H1 (cell line): ENCODE measurements at regions of chr20 and their contacts with region 1.

Region 1: GRCh38 chr20:45138561-45139300 is 14.5 kb upstream of the WFDC12 start:
- DNase-seq: peak; percentile 56 to 99
- H3K4me3 ChIP-seq: no peak overlapping the region
- H3K27ac ChIP-seq: no peak overlapping the region
- H3K4me1 ChIP-seq: no peaks in the 10 kb centered on the region
- H3K27me3 ChIP-seq: no peaks in the 10 kb centered on the region
- CTCF ChIP-seq: peak; percentile 95 to 99 (median 97)
- EP300 ChIP-seq: no peak
- POLR2A ChIP-seq: no peak
- RAD21 ChIP-seq: peak; percentile 88 to 92

Region 2: GRCh38 chr20:45044084-45044573 is 94.6 kb before region 1 on chr20:
- CTCF ChIA-PET with region 1: interaction called, 10 read pairs
- POLR2A ChIA-PET with region 1: no interaction called
- DNase-seq: peak in 1 of 2 experiments; percentile 13
- H3K4me3 ChIP-seq: no peak overlapping the region
- H3K27ac ChIP-seq: no peak overlapping the region
- H3K4me1 ChIP-seq: peaks cover 0 to 14% (median 2%) of the 10 kb centered on the region in 4 experiments; a peak in 3 of 7 replicates
- H3K27me3 ChIP-seq: no peaks in the 10 kb centered on the region
- CTCF ChIP-seq: peak in 2 of 3 experiments; percentile 67 to 85; a peak in 2 of 4 replicates
- EP300 ChIP-seq: no peak
- POLR2A ChIP-seq: no peak
- RAD21 ChIP-seq: peak; percentile 84 to 86

Region 3: GRCh38 chr20:45121388-45121787 is 17.3 kb before region 1 on chr20:
- CTCF ChIA-PET with region 1: interaction called, 12 read pairs
- POLR2A ChIA-PET with region 1: no interaction called
- DNase-seq: no peak
- H3K4me3 ChIP-seq: no peak overlapping the region
- H3K27ac ChIP-seq: no peak overlapping the region
- H3K4me1 ChIP-seq: no peaks in the 10 kb centered on the region
- H3K27me3 ChIP-seq: no peaks in the 10 kb centered on the region; a peak in 1 of 7 replicates
- CTCF ChIP-seq: no peak
- EP300 ChIP-seq: no peak
- POLR2A ChIP-seq: no peak
- RAD21 ChIP-seq: no peak

Region 4: GRCh38 chr20:45157962-45158361 is 19.2 kb after region 1 on chr20:
- CTCF ChIA-PET with region 1: interaction called, 17 read pairs
- POLR2A ChIA-PET with region 1: no interaction called
- DNase-seq: no peak
- H3K4me3 ChIP-seq: no peak overlapping the region
- H3K27ac ChIP-seq: no peak overlapping the region
- H3K4me1 ChIP-seq: no peaks in the 10 kb centered on the region
- H3K27me3 ChIP-seq: peaks cover 0 to 1% (median 0%) of the 10 kb centered on the region in 4 experiments; a peak in 1 of 7 replicates
- CTCF ChIP-seq: no peak
- EP300 ChIP-seq: no peak
- POLR2A ChIP-seq: no peak
- RAD21 ChIP-seq: no peak

Region 5: DNA sequence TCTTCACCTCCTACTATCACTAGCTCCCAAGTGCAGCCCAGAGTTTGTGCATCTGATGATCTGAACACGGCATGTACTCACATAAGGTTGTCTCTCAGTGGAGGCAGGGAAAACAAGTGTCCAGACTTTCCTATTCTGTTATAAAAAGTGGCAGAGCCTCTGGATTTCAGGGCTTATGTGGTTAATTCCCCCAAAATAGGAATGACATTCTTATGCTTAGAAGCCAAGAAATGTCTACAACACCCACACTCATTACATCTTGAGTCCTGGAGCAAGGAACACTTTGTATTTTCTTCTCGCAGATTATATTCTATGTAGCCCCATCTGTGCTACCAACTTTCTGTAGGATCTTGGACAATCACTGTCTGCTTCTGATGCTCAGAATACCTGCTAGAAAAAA is 54.6 kb after region 1 on chr20:
- CTCF ChIA-PET with region 1: interaction called, 18 read pairs
- POLR2A ChIA-PET with region 1: no interaction called
- DNase-seq: no peak
- H3K4me3 ChIP-seq: no peak overlapping the region
- H3K27ac ChIP-seq: no peak overlapping the region
- H3K4me1 ChIP-seq: peaks cover 0 to 7% (median 5%) of the 10 kb centered on the region in 4 experiments; a peak in 3 of 7 replicates
- H3K27me3 ChIP-seq: 0 out of 7 replicates have a peak, but pooled peaks cover 0 to 1% (median 0%) of the 10 kb centered on the region in 4 experiments
- CTCF ChIP-seq: no peak
- EP300 ChIP-seq: no peak
- POLR2A ChIP-seq: no peak
- RAD21 ChIP-seq: no peak

Region 6: GRCh38 chr20:45254869-45255266 is 116.1 kb after region 1 on chr20:
- CTCF ChIA-PET with region 1: no interaction called
- POLR2A ChIA-PET with region 1: no interaction called
- DNase-seq: no peak
- H3K4me3 ChIP-seq: no peak overlapping the region
- H3K27ac ChIP-seq: no peak overlapping the region
- H3K4me1 ChIP-seq: peaks cover 0 to 6% (median 3%) of the 10 kb centered on the region in 4 experiments; a peak in 5 of 7 replicates
- H3K27me3 ChIP-seq: peaks cover 0 to 2% (median 0%) of the 10 kb centered on the region in 4 experiments; a peak in 2 of 7 replicates
- CTCF ChIP-seq: no peak
- EP300 ChIP-seq: no peak
- POLR2A ChIP-seq: no peak
- RAD21 ChIP-seq: no peak

Region 7: DNA sequence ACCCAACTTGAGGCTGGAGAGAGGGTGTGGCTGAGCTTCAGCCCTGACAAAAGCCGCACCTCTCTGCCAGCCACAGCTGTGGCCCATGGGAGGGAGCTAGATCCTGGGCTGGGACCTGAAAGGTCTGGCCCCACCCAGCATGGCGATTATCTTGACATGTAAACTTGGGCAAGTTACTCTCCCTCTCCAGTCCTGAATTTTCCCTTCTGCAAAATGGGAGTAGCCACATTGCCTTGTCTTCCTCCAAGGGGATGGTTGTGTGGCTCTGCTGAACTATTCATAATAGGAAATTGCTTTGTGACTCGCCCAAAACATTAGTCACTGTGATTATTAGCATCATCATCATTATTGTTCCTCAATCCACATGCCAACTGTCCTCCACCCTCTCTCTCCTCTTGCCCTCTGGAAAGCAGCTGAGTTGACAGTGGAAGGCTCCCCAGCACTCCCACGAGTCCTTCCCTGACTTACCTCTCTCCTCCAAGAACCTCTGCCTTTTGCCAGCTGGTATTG is 144.9 kb after region 1 on chr20:
- CTCF ChIA-PET with region 1: interaction called, 28 read pairs
- POLR2A ChIA-PET with region 1: no interaction called
- DNase-seq: no peak
- H3K4me3 ChIP-seq: no peak overlapping the region
- H3K27ac ChIP-seq: no peak overlapping the region
- H3K4me1 ChIP-seq: no peaks in the 10 kb centered on the region
- H3K27me3 ChIP-seq: no peaks in the 10 kb centered on the region
- CTCF ChIP-seq: no peak
- EP300 ChIP-seq: no peak
- POLR2A ChIP-seq: no peak
- RAD21 ChIP-seq: no peak